CD14-positive monocyte (primary cell): ENCODE measurements at regions of chr5 and their contacts with region 1.

Region 1: DNA sequence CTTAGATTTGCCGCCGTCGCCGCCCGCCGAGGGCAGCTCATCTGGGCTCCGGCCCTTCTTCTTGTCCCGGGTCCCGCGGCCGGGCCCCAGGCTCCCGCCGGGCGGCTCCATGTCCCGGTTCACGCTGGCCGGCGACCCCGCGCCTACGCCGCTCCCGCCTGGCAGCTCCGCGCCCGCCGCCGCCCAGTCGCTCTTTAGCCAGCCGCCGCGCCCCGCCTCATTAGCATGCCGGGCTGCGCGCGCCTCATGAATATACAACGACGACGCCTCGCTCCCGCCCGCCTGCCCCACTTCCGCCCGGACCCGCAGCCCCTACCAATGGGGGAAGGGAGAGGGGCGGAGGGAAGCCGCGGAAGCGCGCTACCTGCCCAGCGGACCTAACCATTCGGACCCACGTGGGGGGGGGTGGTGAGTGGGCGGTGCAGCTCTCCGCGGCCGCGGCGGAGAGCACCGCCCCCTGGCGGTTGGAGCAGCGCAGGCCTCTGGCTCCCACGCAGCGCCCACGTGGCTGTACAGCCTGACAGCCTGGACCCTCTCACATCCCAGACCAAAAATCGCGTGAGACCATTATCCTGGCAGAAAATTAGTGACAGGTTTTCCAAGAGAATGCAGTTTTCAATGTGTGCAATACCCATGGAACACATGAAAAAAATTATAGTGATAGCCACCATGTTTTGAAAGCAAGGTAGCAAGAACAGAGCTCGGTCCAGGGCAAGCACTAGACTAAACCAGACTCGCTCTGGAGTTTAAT is at the start of gene DIAPH1:
- DNase-seq: peak; percentile 95 to 98 (median 98)
- H3K4me3 ChIP-seq: peak within 1 kb of the TSS; percentile 62 to 97 (median 96)
- H3K4me3 Mint-ChIP-seq: peak within 1 kb of the TSS; percentile 99
- H3K27ac ChIP-seq: peak within 1 kb of the TSS; percentile 82 to 88
- H3K27ac Mint-ChIP-seq: peak within 1 kb of the TSS; percentile 95 to 97 (median 96)
- H3K4me1 ChIP-seq: peaks cover 57 to 65% of the 10 kb centered on the region in 2 donors
- H3K4me1 Mint-ChIP-seq: peaks cover 59% of the 10 kb centered on the region
- H3K27me3 ChIP-seq: no peaks in the 10 kb centered on the region
- H3K27me3 Mint-ChIP-seq: peaks cover 0 to 2% (median 2%) of the 10 kb centered on the region in 3 donors
- CTCF ChIP-seq: peak; percentile 95
- polyA plus RNA-seq, gene DIAPH1: 60.2 to 140 (median 98.6) TPM

Region 2: DNA sequence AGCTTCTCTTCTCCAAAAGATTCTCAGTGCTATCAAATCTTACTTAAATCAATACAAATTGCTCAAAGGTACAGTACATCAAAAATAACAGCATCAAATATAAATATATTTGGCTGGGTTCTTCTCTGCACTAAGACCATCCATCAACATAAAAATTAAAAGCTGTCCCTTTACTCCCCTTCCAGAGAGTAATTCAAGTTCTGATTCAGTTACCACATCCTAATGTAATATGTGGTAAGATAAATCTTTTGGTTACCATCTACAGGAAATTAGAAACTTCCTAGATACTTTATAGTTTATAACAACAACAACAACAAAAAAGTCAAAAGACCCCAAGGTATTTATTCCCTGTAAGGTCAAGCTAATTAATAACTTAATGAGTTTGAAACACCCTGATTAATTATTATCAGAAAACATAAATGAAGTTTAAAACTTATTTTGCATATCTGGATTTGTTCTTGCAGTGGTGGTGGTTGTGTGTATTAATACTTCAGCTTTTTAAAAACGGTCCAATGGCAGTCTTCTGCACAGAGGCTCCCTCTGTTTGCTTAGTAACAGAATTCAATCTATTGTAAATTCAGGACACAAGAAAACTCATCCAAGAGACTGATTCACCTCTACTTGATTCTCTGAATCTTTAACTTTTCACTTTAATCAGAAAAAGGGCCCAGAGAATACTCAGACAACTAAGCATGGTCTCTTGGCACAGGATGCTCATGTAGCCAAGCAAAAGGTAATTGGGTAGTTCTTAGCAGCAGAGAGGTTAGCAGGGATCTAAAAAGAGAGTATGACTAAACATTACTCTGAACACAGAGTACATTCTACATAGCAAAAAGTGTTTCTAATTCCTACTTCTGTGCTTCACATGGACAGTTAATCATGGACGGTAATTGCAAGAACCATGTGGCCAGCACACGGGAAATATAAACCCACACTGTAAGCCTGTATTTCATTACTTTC is 20.3 kb before region 1 on chr5:
- intact Hi-C with region 1: loop called in 1 of 2 experiments (anchors 2 kb)
- DNase-seq: peak in 1 of 3 donors; percentile 32
- H3K4me3 ChIP-seq: peak overlapping the region in 1 of 3 experiments; percentile 15
- H3K4me3 Mint-ChIP-seq: no peak overlapping the region
- H3K27ac ChIP-seq: peak overlapping the region; percentile 12 to 73
- H3K27ac Mint-ChIP-seq: peak overlapping the region; percentile 65 to 94 (median 88)
- H3K4me1 ChIP-seq: peaks cover 59 to 71% of the 10 kb centered on the region in 2 donors
- H3K4me1 Mint-ChIP-seq: peaks cover 64% of the 10 kb centered on the region
- H3K27me3 ChIP-seq: no peaks in the 10 kb centered on the region
- H3K27me3 Mint-ChIP-seq: no peaks in the 10 kb centered on the region
- CTCF ChIP-seq: no peak